ENCODE measurements at regions of chr19 and their contacts with region 1.

Region 1: GRCh38 chr19:48842789-48843162 is 6.5 kb upstream of the HSD17B14 start:
- DNase-seq: peak; percentile 27
- ATAC-seq: peak; percentile 71
- H3K4me3 Mint-ChIP-seq: no peak overlapping the region
- H3K27ac Mint-ChIP-seq: peak overlapping the region; percentile 15
- H3K4me1 Mint-ChIP-seq: peaks cover 5% of the 10 kb centered on the region
- H3K27me3 Mint-ChIP-seq: no peaks in the 10 kb centered on the region
- CTCF ChIP-seq: no peak

Region 2: DNA sequence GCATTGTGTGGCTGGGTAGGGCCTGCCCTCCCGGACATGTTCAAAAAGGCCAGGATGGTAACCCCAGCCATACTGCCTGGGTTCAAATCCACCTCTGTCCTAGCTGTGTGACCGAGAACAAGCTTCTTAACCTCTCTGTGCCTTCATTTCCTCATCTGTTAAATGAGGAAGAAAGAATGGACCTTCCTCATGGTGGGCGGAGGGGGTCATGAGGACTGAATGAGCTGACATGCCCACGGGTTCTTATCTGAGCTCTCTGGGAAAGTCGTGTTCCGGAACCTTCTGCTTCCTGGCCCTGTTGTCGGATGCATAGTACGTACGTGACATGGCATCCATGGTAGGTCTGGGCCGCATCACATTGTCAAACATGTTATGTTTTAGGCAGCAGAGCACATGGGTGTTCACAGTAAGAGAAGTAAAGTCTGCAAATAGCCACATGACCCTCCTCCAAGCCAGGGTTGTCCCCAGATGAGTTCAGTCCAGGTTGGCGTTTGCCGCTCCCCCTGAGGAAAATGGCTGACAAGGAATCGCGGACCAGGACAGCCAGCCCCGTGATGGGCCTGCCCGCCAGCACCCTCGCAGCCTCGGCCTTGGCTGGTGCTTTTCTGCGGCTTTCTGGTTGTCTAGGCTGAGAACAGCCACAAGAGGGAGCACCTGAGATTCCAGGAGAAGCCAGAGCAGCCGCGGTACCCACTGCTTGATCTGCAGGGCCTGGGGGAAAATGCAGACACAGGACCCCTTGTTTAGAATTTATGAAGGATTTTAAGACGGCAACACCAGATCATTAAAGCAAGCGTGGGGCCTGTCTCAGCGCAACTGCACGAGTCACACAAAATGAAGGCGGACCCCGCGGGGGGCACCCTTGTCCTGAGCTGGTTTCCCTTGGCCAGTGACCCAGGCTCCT is 167.6 kb before region 1 on chr19:
- CTCF ChIA-PET with region 1: no interaction called
- POLR2A ChIA-PET with region 1: no interaction called
- intact Hi-C with region 1: loop called (anchors 1 kb)
- DNase-seq: peak; percentile 47
- ATAC-seq: peak; percentile 96
- H3K4me3 Mint-ChIP-seq: no peak overlapping the region
- H3K27ac Mint-ChIP-seq: no peak overlapping the region
- H3K4me1 Mint-ChIP-seq: peaks cover 7% of the 10 kb centered on the region
- H3K27me3 Mint-ChIP-seq: peaks cover 1% of the 10 kb centered on the region
- CTCF ChIP-seq: peak; percentile 65

Region 3: DNA sequence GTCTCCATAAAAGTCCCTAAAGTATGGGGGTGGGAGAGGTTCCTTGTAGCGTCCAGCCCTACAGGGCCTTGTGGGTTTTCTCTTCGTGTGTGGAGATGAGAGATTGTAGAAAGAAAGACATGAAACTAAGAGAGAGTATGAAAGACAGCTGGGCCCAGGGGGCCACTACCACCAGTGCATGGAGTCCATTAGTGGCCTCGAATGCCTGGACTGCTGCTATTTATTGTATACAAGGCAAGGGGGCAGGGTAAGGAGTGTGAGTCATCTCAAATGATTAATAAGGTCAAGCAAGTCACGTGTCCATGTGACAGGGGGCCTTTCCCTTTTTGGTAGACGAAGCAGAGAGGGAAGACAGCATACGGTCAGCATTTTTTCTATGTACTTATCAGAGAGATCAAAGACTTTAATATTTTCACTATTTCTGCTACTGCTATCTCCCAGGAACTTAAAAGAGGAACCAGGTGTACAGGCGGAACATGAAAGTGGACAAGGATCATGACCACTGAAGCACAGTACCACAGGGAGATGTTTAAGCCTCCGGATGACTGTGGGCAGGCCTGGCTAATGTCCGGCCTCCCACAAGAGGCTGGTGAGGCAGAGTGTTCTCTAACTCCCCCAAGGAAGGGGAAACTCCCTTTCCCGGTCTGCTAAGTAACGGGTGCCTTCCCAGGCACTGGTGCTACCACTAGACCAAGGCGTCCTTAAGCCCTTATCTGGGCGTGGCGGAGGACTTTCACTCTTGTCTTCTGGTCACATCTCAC is 62.0 kb before region 1 on chr19:
- CTCF ChIA-PET with region 1: interaction called, 11 read pairs
- POLR2A ChIA-PET with region 1: interaction called, 5 read pairs
- intact Hi-C with region 1: no loop called
- DNase-seq: no peak
- ATAC-seq: no peak
- H3K4me3 Mint-ChIP-seq: no peak overlapping the region
- H3K27ac Mint-ChIP-seq: peak overlapping the region; percentile 51
- H3K4me1 Mint-ChIP-seq: peaks cover 22% of the 10 kb centered on the region
- H3K27me3 Mint-ChIP-seq: no peaks in the 10 kb centered on the region
- CTCF ChIP-seq: no peak

Region 4: DNA sequence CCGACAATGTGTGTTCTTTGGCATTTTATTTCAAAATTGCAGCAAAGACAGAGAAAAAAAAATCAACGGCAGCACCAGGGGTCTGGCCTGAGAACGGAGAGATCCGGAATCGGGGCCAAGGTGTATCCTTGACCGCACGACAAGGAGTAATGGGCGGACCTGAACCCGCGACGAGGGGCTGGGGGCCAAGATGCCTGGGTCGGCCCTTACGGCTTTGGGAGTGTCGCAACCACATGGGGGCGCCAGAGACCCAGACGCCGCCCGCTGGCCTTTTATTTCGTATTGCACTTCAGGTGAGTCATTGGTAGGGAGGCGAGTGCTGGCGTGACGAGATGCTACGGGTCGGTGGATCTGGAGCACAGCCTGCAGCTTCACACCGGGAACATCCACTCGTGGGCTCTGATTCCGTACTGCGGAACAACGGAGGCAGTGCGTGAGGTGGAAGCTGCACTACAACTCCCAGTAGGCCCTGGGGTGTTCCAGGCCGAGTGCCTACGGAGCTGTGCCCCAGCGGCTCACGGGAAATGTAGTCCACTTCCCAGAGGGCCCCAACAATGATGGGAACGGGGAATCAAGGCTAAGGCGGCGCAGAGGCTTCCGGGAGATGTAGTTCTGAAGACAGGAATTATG is 47.6 kb before region 1 on chr19:
- CTCF ChIA-PET with region 1: interaction called, 272 read pairs
- POLR2A ChIA-PET with region 1: interaction called, 20 read pairs
- intact Hi-C with region 1: loop called (anchors 1 kb)
- DNase-seq: peak; percentile 79
- ATAC-seq: peak; percentile 98
- H3K4me3 Mint-ChIP-seq: peak overlapping the region; percentile 94
- H3K27ac Mint-ChIP-seq: peak overlapping the region; percentile 88
- H3K4me1 Mint-ChIP-seq: peaks cover 10% of the 10 kb centered on the region
- H3K27me3 Mint-ChIP-seq: no peaks in the 10 kb centered on the region
- CTCF ChIP-seq: peak; percentile 86

Region 5: DNA sequence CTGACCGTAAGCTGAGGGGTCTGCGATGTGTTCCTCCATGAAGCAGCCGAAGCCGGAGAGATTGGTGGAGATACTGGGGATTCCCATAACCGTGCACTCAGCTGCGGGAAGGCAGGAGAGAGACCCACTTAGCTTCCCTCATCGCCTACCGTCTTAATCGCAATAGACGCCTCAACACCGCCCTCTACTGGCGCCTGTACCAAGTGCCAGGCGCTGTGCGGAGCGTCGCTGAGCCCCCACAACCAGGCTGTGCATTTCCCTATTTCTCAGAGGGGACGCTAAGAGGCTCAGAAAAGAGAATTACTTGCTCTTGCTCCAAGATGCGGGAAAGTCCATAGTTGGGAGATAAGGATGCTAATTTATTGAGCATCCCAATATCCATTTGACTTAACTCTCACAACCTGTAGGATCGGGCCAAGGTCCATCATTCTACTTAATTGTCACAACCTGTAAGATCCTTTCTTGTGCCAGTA is 128.2 kb after region 1 on chr19:
- CTCF ChIA-PET with region 1: interaction called, 49 read pairs
- POLR2A ChIA-PET with region 1: interaction called, 8 read pairs
- intact Hi-C with region 1: loop called (anchors 2 kb)
- DNase-seq: peak; percentile 79
- ATAC-seq: peak; percentile 91
- H3K4me3 Mint-ChIP-seq: no peak overlapping the region
- H3K27ac Mint-ChIP-seq: peak overlapping the region; percentile 46
- H3K4me1 Mint-ChIP-seq: peaks cover 30% of the 10 kb centered on the region
- H3K27me3 Mint-ChIP-seq: no peaks in the 10 kb centered on the region
- CTCF ChIP-seq: peak; percentile 97

Region 6: DNA sequence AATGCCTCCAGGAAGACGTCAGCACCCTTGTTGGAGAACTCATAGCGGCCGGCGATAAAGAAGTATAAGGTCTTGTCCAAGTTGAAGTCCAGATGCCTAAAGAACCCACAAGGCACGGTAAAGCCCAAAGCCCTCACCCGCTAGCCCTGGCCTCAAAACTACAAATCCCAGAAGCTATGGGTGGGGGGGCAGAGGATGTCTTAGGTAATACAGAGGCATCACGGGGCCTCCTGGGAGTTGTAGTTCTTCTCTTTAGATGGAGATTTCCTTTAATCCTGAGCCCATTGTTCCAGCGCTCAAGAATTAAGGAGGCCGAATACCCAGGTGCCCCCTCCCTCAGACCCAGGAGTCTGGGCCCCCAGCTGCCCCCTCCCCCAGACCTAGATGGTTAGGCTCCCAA is 139.5 kb after region 1 on chr19:
- CTCF ChIA-PET with region 1: interaction called, 3 read pairs
- POLR2A ChIA-PET with region 1: interaction called, 13 read pairs
- intact Hi-C with region 1: no loop called
- DNase-seq: no peak
- ATAC-seq: no peak
- H3K4me3 Mint-ChIP-seq: no peak overlapping the region
- H3K27ac Mint-ChIP-seq: no peak overlapping the region
- H3K4me1 Mint-ChIP-seq: peaks cover 9% of the 10 kb centered on the region
- H3K27me3 Mint-ChIP-seq: no peaks in the 10 kb centered on the region
- CTCF ChIP-seq: no peak

Region 7: GRCh38 chr19:49210108-49210900 is 367.5 kb after region 1 on chr19:
- CTCF ChIA-PET with region 1: no interaction called
- POLR2A ChIA-PET with region 1: interaction called, 10 read pairs
- intact Hi-C with region 1: no loop called
- DNase-seq: peak; percentile 32
- ATAC-seq: peak; percentile 83
- H3K4me3 Mint-ChIP-seq: peak overlapping the region; percentile 57
- H3K27ac Mint-ChIP-seq: no peak overlapping the region
- H3K4me1 Mint-ChIP-seq: peaks cover 43% of the 10 kb centered on the region
- H3K27me3 Mint-ChIP-seq: no peaks in the 10 kb centered on the region
- CTCF ChIP-seq: no peak